ENCODE measurements at regions of chr4 and their contacts with region 1.

Region 1: DNA sequence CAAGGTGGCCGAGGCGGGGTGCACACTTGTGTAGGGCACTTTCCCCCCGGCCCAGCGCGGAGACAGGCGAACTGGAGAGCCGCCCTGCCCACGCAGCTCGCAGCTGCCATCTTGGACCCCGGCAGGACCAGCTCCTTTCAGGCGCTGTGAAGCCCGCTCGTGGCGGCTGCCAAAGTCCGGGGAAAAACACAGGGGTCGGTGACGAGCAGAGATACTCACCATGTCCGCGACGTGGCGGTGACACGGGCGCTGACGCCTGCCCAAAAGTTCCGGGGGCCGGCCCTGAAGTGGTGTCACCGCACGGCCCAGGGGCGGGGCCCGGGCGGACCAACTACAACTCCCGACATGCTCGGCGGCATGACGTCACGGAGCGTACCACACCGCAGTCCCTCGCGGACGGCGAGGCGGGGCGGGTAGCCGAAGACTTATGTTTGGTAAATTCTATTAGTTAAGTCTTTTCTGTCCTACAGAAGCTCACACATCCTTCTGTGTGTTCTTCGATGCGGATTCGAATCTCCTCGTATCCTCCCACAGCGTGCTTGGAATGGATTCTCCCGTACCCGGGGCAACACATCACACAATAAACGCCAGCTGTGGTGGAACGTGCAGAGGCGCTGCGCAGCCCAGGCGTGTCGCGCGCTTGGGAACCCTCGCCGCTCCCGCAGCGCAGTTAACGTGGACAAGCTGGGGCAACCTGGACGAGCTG is at the start of gene UFSP2:
- DNase-seq: peak; percentile 79 to 94 (median 88)
- H3K4me3 ChIP-seq: peak within 1 kb of the TSS; percentile 64 to 99 (median 89)
- H3K27ac ChIP-seq: peak within 1 kb of the TSS; percentile 79 to 100 (median 99)
- H3K27me3 ChIP-seq: no peaks in the 10 kb centered on the region
- CTCF ChIP-seq: peak in 23 of 56 donors; percentile 6 to 49 (median 15)
- total RNA-seq, gene UFSP2: 15.1 to 59.4 (median 31.0) TPM

Region 2: DNA sequence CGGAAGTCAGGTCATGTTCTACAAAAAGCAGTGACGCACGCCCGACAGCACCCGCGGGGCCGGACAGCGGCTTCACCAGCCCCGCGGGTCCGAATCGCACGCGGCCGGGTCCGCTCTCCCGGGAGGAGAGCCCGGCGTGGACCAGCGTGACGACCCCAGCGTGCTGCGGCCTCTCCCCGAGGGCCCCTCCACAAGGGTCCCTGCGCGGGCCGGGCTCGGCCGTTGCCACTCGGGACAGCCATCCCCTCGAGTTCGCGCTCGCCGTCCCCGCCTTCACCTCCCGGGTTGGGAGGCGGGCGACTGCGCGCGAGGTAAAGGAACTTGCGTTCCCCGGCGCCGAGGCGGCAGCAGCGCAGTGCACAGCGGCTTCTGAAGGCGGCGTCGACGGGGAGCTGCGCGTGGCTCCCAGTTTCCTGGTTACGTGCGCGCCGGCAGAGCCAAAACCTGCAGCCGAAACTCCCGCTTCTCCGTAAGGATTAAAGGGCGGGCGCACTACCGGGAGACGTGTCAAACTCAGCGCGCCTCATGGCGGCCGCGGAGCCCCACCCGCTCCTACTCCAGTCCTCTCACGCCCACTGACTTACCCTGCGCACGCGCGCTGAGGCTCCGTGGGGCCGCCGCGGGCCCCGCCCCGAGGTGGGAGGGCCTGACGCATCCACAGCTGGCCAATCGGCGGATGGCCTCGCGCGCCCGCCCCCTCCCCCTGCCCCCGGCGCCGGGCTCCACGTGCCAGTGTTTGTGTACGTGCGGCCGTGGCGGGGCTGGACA is 29.7 kb before region 1 on chr4:
- intact Hi-C with region 1: loop called (anchors 1 to 2 kb)
- DNase-seq: peak; percentile 96 to 99 (median 98)
- H3K4me3 ChIP-seq: peak overlapping the region; percentile 52 to 100 (median 87)
- H3K27ac ChIP-seq: peak overlapping the region; percentile 92 to 100 (median 100)
- H3K27me3 ChIP-seq: no peaks in the 10 kb centered on the region
- CTCF ChIP-seq: peak in 14 of 56 donors; percentile 5 to 28 (median 14)

Measured in dorsolateral prefrontal cortex (tissue), 120 donors.